WTC11 (cell line): ENCODE measurements at regions of chrX and their contacts with region 1.

Region 1: GRCh38 chrX:131841496-131842410 is 181.3 kb upstream of the STK26 start:
- DNase-seq: peak; percentile 29
- ATAC-seq: peak; percentile 96
- H3K4me3 Mint-ChIP-seq: peak overlapping the region; percentile 44; the same call in 1 of the 2 replicates
- H3K27ac Mint-ChIP-seq: no peak overlapping the region
- H3K4me1 Mint-ChIP-seq: peaks cover 6% of the 10 kb centered on the region
- H3K27me3 Mint-ChIP-seq: no peaks in the 10 kb centered on the region
- CTCF ChIP-seq: no peak

Region 2: GRCh38 chrX:131677655-131678628 is 163.8 kb before region 1 on chrX:
- CTCF ChIA-PET with region 1: interaction called, 22 read pairs
- POLR2A ChIA-PET with region 1: no interaction called
- DNase-seq: peak; percentile 65
- ATAC-seq: peak; percentile 84
- H3K4me3 Mint-ChIP-seq: no peak overlapping the region
- H3K27ac Mint-ChIP-seq: no peak overlapping the region
- H3K4me1 Mint-ChIP-seq: no peaks in the 10 kb centered on the region
- H3K27me3 Mint-ChIP-seq: no peaks in the 10 kb centered on the region
- CTCF ChIP-seq: peak; percentile 58

Region 3: GRCh38 chrX:131830400-131831184 is 11.2 kb before region 1 on chrX:
- CTCF ChIA-PET with region 1: interaction called, 15 read pairs
- POLR2A ChIA-PET with region 1: no interaction called
- DNase-seq: peak; percentile 73
- ATAC-seq: peak; percentile 93
- H3K4me3 Mint-ChIP-seq: peak overlapping the region; percentile 92
- H3K27ac Mint-ChIP-seq: peak overlapping the region; percentile 94
- H3K4me1 Mint-ChIP-seq: peaks cover 33% of the 10 kb centered on the region
- H3K27me3 Mint-ChIP-seq: no peaks in the 10 kb centered on the region
- CTCF ChIP-seq: no peak

Region 4: GRCh38 chrX:132219343-132219768 is 377.6 kb after region 1 on chrX and contains the start of gene RAP2C:
- CTCF ChIA-PET with region 1: interaction called, 19 read pairs
- POLR2A ChIA-PET with region 1: no interaction called
- DNase-seq: peak; percentile 66
- ATAC-seq: peak; percentile 69
- H3K4me3 Mint-ChIP-seq: peak within 1 kb of the TSS; percentile 76
- H3K27ac Mint-ChIP-seq: peak within 1 kb of the TSS; percentile 91
- H3K4me1 Mint-ChIP-seq: peaks cover 18% of the 10 kb centered on the region
- H3K27me3 Mint-ChIP-seq: no peaks in the 10 kb centered on the region
- CTCF ChIP-seq: no peak
- total RNA-seq, gene RAP2C: 20.5 to 25.2 TPM (median 25.0 TPM) in 3 replicates